HEK293T (cell line): ENCODE measurements at regions of chr14 and their contacts with region 1.

Region 1: GRCh38 chr14:36070031-36070719 is 106.3 kb downstream of the PTCSC3 start:
- DNase-seq: peak; percentile 76

Region 2: GRCh38 chr14:35776823-35777222 is 293.4 kb before region 1 on chr14:
- CTCF ChIA-PET with region 1: no interaction called
- POLR2A ChIA-PET with region 1: no interaction called
- DNase-seq: no peak

Region 3: GRCh38 chr14:35883677-35884293 is 186.4 kb before region 1 on chr14:
- CTCF ChIA-PET with region 1: interaction called, 22 read pairs
- POLR2A ChIA-PET with region 1: no interaction called
- DNase-seq: peak; percentile 23

Region 4: DNA sequence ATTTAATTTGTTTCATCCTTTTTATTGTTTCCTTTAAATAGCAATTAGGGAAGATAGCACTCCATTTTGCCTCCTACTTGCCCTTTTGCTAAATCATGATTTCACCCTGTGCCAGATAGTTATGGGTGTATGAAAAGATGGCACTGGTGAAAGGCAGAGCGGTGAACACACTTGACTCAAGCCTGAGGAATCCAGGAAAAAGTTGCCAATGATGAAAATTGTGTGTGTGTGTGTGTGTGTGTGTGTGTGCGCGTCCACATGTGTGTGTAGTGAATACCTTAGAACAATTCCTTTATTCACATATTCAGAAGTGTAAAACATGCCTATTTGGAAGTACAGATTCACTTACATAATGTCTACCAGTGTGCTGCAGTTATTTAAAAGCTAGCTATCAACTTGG is 17.5 kb before region 1 on chr14:
- CTCF ChIA-PET with region 1: interaction called, 11 read pairs
- POLR2A ChIA-PET with region 1: no interaction called
- DNase-seq: no peak